Esophagus muscularis mucosa (tissue), 4 donors: ENCODE measurements at regions of chr9 and their contacts with region 1.

Region 1: DNA sequence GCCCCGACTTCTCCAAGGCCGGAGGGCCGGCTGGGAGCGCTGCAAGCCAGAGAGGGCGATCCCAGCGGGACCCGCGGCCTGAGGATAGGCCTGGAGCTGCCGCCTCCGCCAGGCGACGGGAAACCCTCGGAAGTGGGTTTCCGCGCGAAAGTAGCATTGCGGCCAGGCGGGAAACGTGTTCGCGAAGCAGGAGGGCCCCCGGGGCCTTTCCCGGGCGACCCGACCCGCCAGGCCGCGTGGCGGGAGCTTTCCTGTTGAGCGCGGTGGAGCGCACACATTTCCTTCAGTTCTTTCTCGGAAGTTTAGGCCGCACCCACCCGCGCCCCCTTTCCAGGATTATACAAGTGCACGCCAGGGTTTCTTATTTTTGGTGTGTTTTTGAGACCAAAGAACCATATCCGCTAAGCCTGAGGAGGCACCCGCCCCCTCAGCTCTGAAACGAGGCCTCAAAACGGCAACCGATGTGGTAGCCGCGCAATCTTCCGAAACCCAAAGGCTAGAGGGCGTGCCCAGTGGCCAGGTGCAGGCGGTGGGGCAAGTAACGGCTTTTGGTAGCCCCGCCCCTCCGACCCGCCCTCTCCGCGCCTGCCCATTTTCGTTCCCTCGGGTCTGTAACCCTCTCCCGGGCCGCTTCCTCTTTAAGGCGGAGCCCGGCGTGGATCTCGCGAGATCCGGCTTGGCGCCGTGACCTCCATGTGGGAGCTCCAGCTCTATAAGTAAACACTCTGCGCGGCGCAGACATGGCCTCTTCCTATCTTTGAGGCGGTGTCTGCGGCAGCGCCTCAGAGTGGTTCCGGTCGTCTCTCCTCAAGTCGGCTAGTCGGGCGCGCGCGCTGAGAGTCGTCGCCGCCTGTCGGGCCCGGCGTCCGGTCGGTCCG is at the start of gene UHRF2:
- DNase-seq: peak; percentile 99
- H3K4me3 ChIP-seq: peak within 1 kb of the TSS; percentile 87 to 98 (median 92)
- H3K27ac ChIP-seq: peak within 1 kb of the TSS; percentile 79 to 94 (median 89)
- H3K4me1 ChIP-seq: peaks cover 27 to 41% (median 37%) of the 10 kb centered on the region in 4 donors
- H3K27me3 ChIP-seq: peaks cover 0 to 3% (median 0%) of the 10 kb centered on the region in 4 donors
- CTCF ChIP-seq: peak in 1 of 3 experiments; percentile 16
- EP300 ChIP-seq: no peak
- POLR2A ChIP-seq: peak; percentile 11
- total RNA-seq, gene UHRF2: 31.1 to 44.4 (median 41.8) TPM

Region 2: DNA sequence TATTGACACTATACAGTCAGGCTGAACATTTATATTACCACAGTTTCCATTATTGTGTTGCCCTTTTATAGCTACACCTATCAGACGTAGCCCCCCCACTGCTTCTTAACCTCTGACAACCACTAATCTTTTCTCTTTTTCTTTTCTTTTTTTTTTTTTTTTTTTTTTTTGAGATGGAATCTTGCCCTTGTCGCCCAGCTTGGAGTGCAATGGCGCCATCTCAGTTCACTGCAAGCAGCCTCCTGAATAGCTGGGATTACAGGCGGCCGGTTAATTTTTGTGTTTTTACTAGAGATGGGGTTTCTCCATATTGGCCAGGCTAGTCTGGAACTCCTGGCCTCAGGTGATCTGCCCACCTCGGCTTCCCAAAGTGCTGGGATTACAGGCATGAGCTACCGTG is 75.7 kb after region 1 on chr9:
- intact Hi-C with region 1: loop called (anchors 10 kb)
- DNase-seq: no peak
- H3K4me3 ChIP-seq: no peak overlapping the region
- H3K27ac ChIP-seq: no peak overlapping the region
- H3K4me1 ChIP-seq: no peaks in the 10 kb centered on the region
- H3K27me3 ChIP-seq: no peaks in the 10 kb centered on the region
- CTCF ChIP-seq: no peak
- EP300 ChIP-seq: no peak
- POLR2A ChIP-seq: no peak